K562 (cell line): ENCODE measurements at regions of chr5 and their contacts with region 1.

Region 1: DNA sequence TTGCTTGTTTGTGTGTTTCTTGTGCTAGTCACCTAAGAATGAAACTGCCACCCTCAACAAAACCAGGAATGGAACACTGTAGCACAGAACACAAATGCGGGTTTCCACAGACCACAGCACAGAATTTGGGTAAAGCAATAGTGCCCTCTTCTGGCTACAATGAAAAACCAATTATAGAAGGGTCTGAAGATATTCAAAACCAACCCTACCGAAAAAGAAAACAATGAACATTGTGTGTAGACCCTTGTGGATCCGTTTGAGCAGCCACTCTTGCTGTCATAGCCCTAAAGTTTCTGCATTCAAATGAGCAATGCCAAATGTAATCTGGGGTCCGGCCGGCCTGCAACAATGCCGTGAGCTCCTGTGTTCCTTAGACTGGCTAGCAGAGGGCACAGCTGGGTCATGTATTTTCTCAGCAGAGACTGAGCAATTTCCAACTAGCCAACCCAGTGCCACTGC is 8.3 kb upstream of the ENC1 start:
- DNase-seq: peak; percentile 38 to 70 (median 55)
- ATAC-seq: peak; percentile 93
- H3K4me3 ChIP-seq: no peak overlapping the region
- H3K27ac ChIP-seq: no peak overlapping the region
- H3K4me1 ChIP-seq: no peaks in the 10 kb centered on the region
- H3K27me3 ChIP-seq: peaks cover 2 to 10% of the 10 kb centered on the region in 2 experiments; a peak in 2 of 5 replicates
- CTCF ChIP-seq: peak; percentile 64 to 86 (median 64); a peak in 5 of 6 replicates
- EP300 ChIP-seq: no peak
- POLR2A ChIP-seq: no peak
- RAD21 ChIP-seq: peak; percentile 91 to 94

Region 2: DNA sequence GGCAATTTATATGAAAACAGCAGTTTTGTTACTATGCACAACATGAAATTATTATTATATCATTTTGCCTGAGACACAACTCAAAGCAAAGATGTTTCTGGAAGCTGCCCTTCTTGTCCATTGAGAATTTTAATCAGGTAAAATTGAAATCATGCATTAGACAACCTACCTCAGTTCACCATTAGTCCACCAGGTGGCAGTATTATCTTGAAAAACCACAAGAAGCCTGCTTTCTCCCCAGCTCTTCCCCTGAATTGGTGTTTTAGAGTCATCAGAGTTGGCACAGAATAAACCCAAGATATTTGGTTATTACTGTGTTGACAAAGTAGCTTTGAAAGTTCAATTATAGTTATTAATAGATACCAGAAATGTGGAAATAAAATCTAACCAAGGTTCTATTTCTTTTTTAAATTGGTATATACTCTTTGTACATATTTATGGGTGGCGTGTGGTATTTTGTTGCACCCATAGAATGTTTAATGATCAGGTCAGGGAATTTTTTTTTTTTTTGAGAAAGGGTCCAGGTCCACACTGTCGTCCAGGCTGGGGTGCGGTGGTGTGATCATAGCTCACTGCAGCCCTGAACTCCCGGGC is 1057.7 kb before region 1 on chr5:
- CTCF ChIA-PET with region 1: no interaction called
- POLR2A ChIA-PET with region 1: no interaction called
- in situ Hi-C with region 1: no loop called
- intact Hi-C with region 1: loop called (anchors 5 kb)
- DNase-seq: peak; percentile 59 to 81 (median 62)
- ATAC-seq: peak; percentile 89
- H3K4me3 ChIP-seq: no peak overlapping the region
- H3K27ac ChIP-seq: no peak overlapping the region
- H3K4me1 ChIP-seq: no peaks in the 10 kb centered on the region
- H3K27me3 ChIP-seq: no peaks in the 10 kb centered on the region
- CTCF ChIP-seq: peak; percentile 65 to 87 (median 70)
- EP300 ChIP-seq: no peak
- POLR2A ChIP-seq: no peak
- RAD21 ChIP-seq: peak; percentile 90 to 94

Region 3: DNA sequence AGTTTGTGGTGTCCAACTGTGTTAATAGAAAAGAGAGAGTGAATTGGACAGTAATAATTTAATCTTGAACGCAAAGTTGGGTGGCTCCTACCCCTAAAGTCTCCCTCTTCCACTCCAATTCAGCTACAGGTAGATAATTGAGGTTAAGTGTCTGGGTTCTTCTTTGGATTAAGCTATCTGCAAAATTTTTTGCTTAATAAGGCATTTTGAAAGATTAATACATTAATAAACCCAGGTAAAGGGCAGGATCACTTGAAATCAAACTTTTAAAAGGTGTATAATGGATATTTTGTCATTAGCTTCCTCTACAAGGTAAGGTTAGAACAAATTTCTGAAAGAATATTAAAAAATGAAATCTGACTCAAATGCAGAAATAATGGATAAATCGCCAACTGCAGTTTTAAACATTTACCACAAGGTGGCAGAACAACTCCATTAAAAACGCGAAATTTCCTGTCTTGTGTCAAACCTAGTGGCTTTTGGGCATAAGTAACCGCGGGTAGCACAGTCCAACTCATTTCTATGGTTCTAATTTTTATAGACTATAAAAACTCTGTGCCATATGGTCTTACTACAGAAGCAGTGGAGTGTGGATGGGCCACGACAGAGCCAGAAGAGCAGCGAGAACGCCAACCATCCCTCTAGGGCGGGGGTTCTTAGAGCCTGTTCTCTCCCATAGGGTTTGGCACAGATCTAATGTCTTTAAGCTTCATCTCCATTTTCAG is 746.4 kb before region 1 on chr5:
- CTCF ChIA-PET with region 1: interaction called, 23 read pairs
- POLR2A ChIA-PET with region 1: no interaction called
- in situ Hi-C with region 1: loop called (anchors 5 kb)
- intact Hi-C with region 1: loop called (anchors 1 kb)
- DNase-seq: peak; percentile 22 to 55 (median 33)
- ATAC-seq: peak; percentile 48; the same call in 1 of the 3 replicates
- H3K4me3 ChIP-seq: no peak overlapping the region
- H3K27ac ChIP-seq: no peak overlapping the region
- H3K4me1 ChIP-seq: no peaks in the 10 kb centered on the region
- H3K27me3 ChIP-seq: peaks cover 5 to 23% of the 10 kb centered on the region in 2 experiments; a peak in 4 of 5 replicates
- CTCF ChIP-seq: peak; percentile 66 to 84 (median 70)
- EP300 ChIP-seq: no peak
- POLR2A ChIP-seq: no peak
- RAD21 ChIP-seq: peak; percentile 87 to 89

Region 4: GRCh38 chr5:73945498-73945897 is 703.4 kb before region 1 on chr5:
- CTCF ChIA-PET with region 1: no interaction called
- POLR2A ChIA-PET with region 1: no interaction called
- in situ Hi-C with region 1: no loop called
- intact Hi-C with region 1: loop called (anchors 5 kb)
- DNase-seq: peak; percentile 27 to 42 (median 36)
- ATAC-seq: peak; percentile 71
- H3K4me3 ChIP-seq: no peak overlapping the region
- H3K27ac ChIP-seq: no peak overlapping the region
- H3K4me1 ChIP-seq: no peaks in the 10 kb centered on the region
- H3K27me3 ChIP-seq: no peaks in the 10 kb centered on the region
- CTCF ChIP-seq: peak; percentile 41 to 55 (median 46); a peak in 5 of 6 replicates
- EP300 ChIP-seq: no peak
- POLR2A ChIP-seq: no peak
- RAD21 ChIP-seq: peak in 1 of 2 experiments; percentile 34; a peak in 2 of 4 replicates

Region 5: GRCh38 chr5:74035521-74035981 is 613.3 kb before region 1 on chr5:
- CTCF ChIA-PET with region 1: no interaction called
- POLR2A ChIA-PET with region 1: interaction called, 3 read pairs
- in situ Hi-C with region 1: loop called (anchors 25 kb)
- intact Hi-C with region 1: loop called (anchors 5 kb)
- DNase-seq: peak in 2 of 4 experiments; percentile 8 to 25
- ATAC-seq: peak; percentile 55
- H3K4me3 ChIP-seq: no peak overlapping the region
- H3K27ac ChIP-seq: no peak overlapping the region
- H3K4me1 ChIP-seq: no peaks in the 10 kb centered on the region
- H3K27me3 ChIP-seq: no peaks in the 10 kb centered on the region
- CTCF ChIP-seq: peak; percentile 10 to 49 (median 23); a peak in 2 of 6 replicates
- EP300 ChIP-seq: no peak
- POLR2A ChIP-seq: no peak
- RAD21 ChIP-seq: peak; percentile 70 to 75

Region 6: DNA sequence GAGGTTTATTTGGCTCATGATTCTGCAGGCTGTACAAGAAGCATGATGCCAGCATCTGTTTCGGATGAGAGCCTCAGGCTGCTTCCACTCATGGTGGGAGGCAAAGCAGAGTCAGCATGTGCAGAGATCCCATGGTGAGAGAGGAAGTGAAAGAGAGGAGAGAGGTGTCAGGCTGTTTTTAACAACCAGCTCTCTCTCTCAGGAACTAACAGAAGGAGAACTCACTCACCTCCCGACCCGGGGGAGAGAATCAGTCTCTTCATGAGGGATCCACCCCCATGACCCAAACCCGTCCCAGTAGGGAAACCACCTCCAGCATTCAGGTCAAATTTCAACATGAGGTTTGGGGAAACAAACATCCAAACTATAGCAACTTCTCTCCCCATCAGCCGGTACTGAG is 196.0 kb before region 1 on chr5:
- CTCF ChIA-PET with region 1: no interaction called
- POLR2A ChIA-PET with region 1: no interaction called
- in situ Hi-C with region 1: no loop called
- intact Hi-C with region 1: no loop called
- DNase-seq: no peak
- ATAC-seq: no peak
- H3K4me3 ChIP-seq: no peak overlapping the region
- H3K27ac ChIP-seq: no peak overlapping the region
- H3K4me1 ChIP-seq: no peaks in the 10 kb centered on the region
- H3K27me3 ChIP-seq: peaks cover 0 to 2% of the 10 kb centered on the region in 2 experiments; a peak in 1 of 5 replicates
- CTCF ChIP-seq: no peak
- EP300 ChIP-seq: no peak
- POLR2A ChIP-seq: no peak
- RAD21 ChIP-seq: no peak